PC-3 (cell line): ENCODE measurements at regions of chr10 and their contacts with region 1.

Region 1: GRCh38 chr10:7374795-7375194 is 36.0 kb downstream of the SFMBT2 start:
- DNase-seq: peak; percentile 85
- ATAC-seq: peak; percentile 79
- H3K4me3 ChIP-seq: peak overlapping the region; percentile 41; the same call in 1 of the 2 replicates
- H3K27ac ChIP-seq: peak overlapping the region; percentile 97
- H3K4me1 ChIP-seq: peaks cover 19% of the 10 kb centered on the region
- H3K27me3 ChIP-seq: no peaks in the 10 kb centered on the region
- CTCF ChIP-seq: no peak

Region 2: GRCh38 chr10:7218968-7219367 is 155.8 kb before region 1 on chr10:
- CTCF ChIA-PET with region 1: no interaction called
- POLR2A ChIA-PET with region 1: no interaction called
- intact Hi-C with region 1: no loop called
- DNase-seq: peak; percentile 6
- ATAC-seq: no peak
- H3K4me3 ChIP-seq: no peak overlapping the region
- H3K27ac ChIP-seq: no peak overlapping the region
- H3K4me1 ChIP-seq: no peaks in the 10 kb centered on the region
- H3K27me3 ChIP-seq: no peaks in the 10 kb centered on the region
- CTCF ChIP-seq: 0 out of 2 replicates have a peak, but pooled peaks have one; percentile 24

Region 3: DNA sequence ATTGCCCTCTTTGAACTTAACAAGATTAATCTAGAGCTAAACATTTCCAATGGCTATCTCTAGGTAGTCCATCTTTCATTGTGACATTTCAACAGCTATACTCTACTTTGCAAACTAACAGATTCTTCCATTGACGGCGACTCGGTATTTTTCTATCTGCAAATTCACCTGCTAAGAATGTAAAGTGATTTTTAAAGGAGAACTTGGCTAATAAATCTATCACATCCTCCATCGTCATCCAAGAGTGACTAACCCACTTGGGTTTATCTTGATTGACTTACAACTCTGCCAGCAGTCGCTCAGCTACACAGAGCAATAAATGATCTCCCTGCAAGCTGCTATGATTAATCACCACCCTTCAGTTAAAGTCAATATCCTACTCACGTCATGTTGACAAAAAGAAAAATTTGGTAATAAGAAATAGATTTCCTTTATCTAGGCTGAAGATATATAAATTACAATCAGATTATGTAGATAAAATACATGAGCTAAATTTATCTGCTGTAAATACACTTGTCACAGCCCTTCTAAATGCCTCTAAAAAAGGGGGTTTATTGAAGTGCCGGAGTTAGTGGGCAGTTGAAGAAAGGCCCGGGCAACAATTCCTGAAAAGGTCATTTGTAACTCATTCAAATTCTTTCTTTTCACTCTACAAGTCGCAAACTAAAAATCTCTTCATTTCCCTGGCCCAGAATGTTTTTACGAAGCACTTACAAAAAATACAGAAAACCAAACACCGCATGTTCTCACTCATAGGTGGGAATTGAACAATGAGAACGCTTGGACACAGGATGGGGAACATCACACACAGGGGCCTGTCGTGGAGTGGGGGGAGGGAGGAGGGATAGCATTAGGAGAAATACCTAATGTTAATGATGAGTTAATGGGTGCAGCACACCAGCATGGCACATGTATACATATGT is 63.3 kb before region 1 on chr10:
- CTCF ChIA-PET with region 1: no interaction called
- POLR2A ChIA-PET with region 1: no interaction called
- intact Hi-C with region 1: loop called (anchors 1 kb)
- DNase-seq: peak; percentile 89
- ATAC-seq: peak; percentile 97
- H3K4me3 ChIP-seq: no peak overlapping the region
- H3K27ac ChIP-seq: peak overlapping the region; percentile 86
- H3K4me1 ChIP-seq: peaks cover 12% of the 10 kb centered on the region
- H3K27me3 ChIP-seq: no peaks in the 10 kb centered on the region
- CTCF ChIP-seq: no peak

Region 4: GRCh38 chr10:7322623-7323022 is 52.2 kb before region 1 on chr10:
- CTCF ChIA-PET with region 1: no interaction called
- POLR2A ChIA-PET with region 1: no interaction called
- intact Hi-C with region 1: no loop called
- DNase-seq: no peak
- ATAC-seq: no peak
- H3K4me3 ChIP-seq: no peak overlapping the region
- H3K27ac ChIP-seq: no peak overlapping the region
- H3K4me1 ChIP-seq: no peaks in the 10 kb centered on the region
- H3K27me3 ChIP-seq: no peaks in the 10 kb centered on the region
- CTCF ChIP-seq: no peak

Region 5: GRCh38 chr10:7354354-7355026 is 20.3 kb before region 1 on chr10:
- CTCF ChIA-PET with region 1: no interaction called
- POLR2A ChIA-PET with region 1: no interaction called
- intact Hi-C with region 1: loop called (anchors 1 kb)
- DNase-seq: peak; percentile 92
- ATAC-seq: peak; percentile 84
- H3K4me3 ChIP-seq: no peak overlapping the region
- H3K27ac ChIP-seq: peak overlapping the region; percentile 78
- H3K4me1 ChIP-seq: peaks cover 9% of the 10 kb centered on the region
- H3K27me3 ChIP-seq: no peaks in the 10 kb centered on the region
- CTCF ChIP-seq: no peak

Region 6: GRCh38 chr10:7388602-7389001 is 13.8 kb after region 1 on chr10:
- CTCF ChIA-PET with region 1: no interaction called
- POLR2A ChIA-PET with region 1: no interaction called
- intact Hi-C with region 1: no loop called
- DNase-seq: no peak
- ATAC-seq: no peak
- H3K4me3 ChIP-seq: no peak overlapping the region
- H3K27ac ChIP-seq: no peak overlapping the region
- H3K4me1 ChIP-seq: peaks cover 5% of the 10 kb centered on the region; the same call in 1 of the 2 replicates
- H3K27me3 ChIP-seq: no peaks in the 10 kb centered on the region
- CTCF ChIP-seq: no peak